Panc1 (cell line): ENCODE measurements at regions of chr19 and their contacts with region 1.

Region 1: DNA sequence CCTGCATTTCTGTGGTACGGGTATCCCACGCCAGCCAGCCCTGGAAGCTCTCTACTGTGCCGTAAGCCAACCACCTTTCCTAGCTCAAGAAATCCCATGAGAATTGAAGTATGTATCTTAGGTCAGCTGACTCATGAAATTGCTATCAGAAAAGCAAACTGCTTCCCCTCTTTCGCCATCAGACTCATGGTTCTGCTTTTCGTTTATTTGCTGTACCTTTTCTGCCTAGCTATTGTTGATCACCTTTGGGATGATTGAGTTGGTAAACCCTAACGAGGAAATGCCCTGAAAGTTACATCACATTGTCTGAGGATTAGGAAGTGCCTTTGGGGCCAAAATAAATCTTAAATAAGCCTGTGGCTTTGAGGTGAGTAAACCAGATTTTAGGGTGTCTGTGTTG is at the start of gene ADGRE3:
- DNase-seq: no peak
- ATAC-seq: no peak
- H3K4me3 ChIP-seq: no peak within 1 kb of the TSS
- H3K27ac ChIP-seq: no peak within 1 kb of the TSS
- H3K4me1 ChIP-seq: no peaks in the 10 kb centered on the region
- H3K27me3 ChIP-seq: peaks cover 2% of the 10 kb centered on the region; the same call in 1 of the 2 replicates
- CTCF ChIP-seq: no peak
- total RNA-seq, gene ADGRE3: not detected

Region 2: GRCh38 chr19:14577885-14578427 is 96.8 kb before region 1 on chr19:
- CTCF ChIA-PET with region 1: no interaction called
- POLR2A ChIA-PET with region 1: no interaction called
- in situ Hi-C with region 1: no loop called
- intact Hi-C with region 1: loop called (anchors 5 kb)
- DNase-seq: no peak
- ATAC-seq: peak; percentile 58; the same call in 1 of the 2 replicates
- H3K4me3 ChIP-seq: no peak overlapping the region
- H3K27ac ChIP-seq: no peak overlapping the region
- H3K4me1 ChIP-seq: no peaks in the 10 kb centered on the region
- H3K27me3 ChIP-seq: no peaks in the 10 kb centered on the region
- CTCF ChIP-seq: no peak